ENCODE measurements at regions of chrX and their contacts with region 1.

Region 1: DNA sequence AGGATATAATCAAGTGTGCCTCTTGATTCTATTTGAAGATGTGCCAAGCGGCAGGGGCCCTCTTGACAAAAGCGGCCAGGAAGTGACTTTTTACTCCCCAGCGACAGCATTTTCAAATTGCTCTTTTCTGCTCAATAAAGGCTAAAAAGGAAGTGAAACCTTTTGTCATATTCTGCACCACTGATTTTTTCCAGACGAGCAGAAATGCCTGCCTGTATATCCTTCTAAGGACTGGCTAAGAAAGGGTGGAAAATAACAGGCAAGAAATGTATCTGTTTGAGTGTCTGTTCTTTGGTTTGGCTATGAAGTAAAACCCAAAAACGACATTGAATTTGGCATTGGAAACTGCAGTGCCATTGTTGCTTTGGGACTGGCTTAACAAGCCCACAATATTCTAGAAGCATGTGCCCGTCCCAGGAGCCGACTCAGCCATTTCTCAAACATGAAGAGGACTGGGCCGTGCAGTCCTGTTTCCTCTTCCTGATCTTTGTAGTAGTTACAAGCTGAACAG is 25.4 kb downstream of the TMSB4X start:
- DNase-seq: peak; percentile 67
- ATAC-seq: peak; percentile 46
- H3K4me3 Mint-ChIP-seq: peak overlapping the region; percentile 74
- H3K27ac Mint-ChIP-seq: peak overlapping the region; percentile 96
- H3K4me1 Mint-ChIP-seq: peaks cover 65% of the 10 kb centered on the region
- H3K27me3 Mint-ChIP-seq: no peaks in the 10 kb centered on the region
- CTCF ChIP-seq: no peak

Region 2: DNA sequence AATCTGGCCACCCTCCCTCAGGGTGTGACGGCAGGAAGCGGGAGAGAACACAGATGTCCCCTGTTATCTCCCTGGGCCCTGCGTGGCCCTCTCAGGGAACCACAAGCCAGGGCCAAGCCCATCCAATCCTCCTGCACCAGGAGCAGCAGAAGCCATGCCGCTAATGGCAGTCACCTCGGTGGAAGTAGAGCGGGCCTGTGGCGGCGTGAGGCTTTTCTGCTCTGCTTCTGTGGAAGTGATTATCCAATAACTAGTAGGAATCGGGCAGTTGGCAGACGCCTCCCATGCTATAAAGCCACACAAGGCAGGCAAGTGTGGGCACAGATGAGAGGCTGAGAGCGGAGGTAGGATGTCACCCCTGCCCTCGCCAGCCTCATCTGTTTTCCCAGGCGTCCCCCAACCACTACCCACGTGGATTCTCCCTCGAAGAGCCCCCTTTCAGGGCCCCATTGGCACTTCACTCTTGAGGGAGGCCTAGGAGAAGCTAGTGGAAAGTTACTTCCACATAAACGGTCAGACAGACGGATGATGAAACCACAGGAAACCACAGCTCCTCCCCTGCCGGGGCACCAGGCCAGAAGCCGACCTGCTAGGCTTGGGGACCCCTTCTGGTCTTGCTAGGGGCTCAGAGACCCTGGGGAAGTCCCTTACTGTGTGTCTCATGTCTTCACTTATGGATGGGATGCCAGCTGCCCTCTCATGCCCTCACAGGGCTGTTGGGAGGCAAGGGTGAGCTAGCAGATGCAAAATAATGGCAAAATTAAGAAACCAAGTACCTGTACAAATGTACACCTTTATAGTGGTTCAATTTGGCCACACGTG is 44.3 kb before region 1 on chrX:
- CTCF ChIA-PET with region 1: interaction called, 3 read pairs
- POLR2A ChIA-PET with region 1: interaction called, 12 read pairs
- intact Hi-C with region 1: no loop called
- DNase-seq: peak; percentile 83
- ATAC-seq: peak; percentile 45
- H3K4me3 Mint-ChIP-seq: peak overlapping the region; percentile 88
- H3K27ac Mint-ChIP-seq: peak overlapping the region; percentile 98
- H3K4me1 Mint-ChIP-seq: peaks cover 53% of the 10 kb centered on the region
- H3K27me3 Mint-ChIP-seq: no peaks in the 10 kb centered on the region
- CTCF ChIP-seq: no peak

Region 3: GRCh38 chrX:12984629-12985319 is 15.6 kb before region 1 on chrX:
- CTCF ChIA-PET with region 1: interaction called, 3 read pairs
- POLR2A ChIA-PET with region 1: interaction called, 127 read pairs
- intact Hi-C with region 1: loop called (anchors 2 kb)
- DNase-seq: peak; percentile 66
- ATAC-seq: peak; percentile 81
- H3K4me3 Mint-ChIP-seq: peak overlapping the region; percentile 50
- H3K27ac Mint-ChIP-seq: peak overlapping the region; percentile 97
- H3K4me1 Mint-ChIP-seq: peaks cover 74% of the 10 kb centered on the region
- H3K27me3 Mint-ChIP-seq: no peaks in the 10 kb centered on the region
- CTCF ChIP-seq: no peak

Region 4: GRCh38 chrX:13029341-13029740 is 29.0 kb after region 1 on chrX:
- CTCF ChIA-PET with region 1: no interaction called
- POLR2A ChIA-PET with region 1: no interaction called
- intact Hi-C with region 1: no loop called
- DNase-seq: no peak
- ATAC-seq: no peak
- H3K4me3 Mint-ChIP-seq: peak overlapping the region; percentile 32
- H3K27ac Mint-ChIP-seq: peak overlapping the region; percentile 79
- H3K4me1 Mint-ChIP-seq: peaks cover 66% of the 10 kb centered on the region
- H3K27me3 Mint-ChIP-seq: no peaks in the 10 kb centered on the region
- CTCF ChIP-seq: no peak

Region 5: GRCh38 chrX:14220386-14220944 is 1220.1 kb after region 1 on chrX:
- CTCF ChIA-PET with region 1: no interaction called
- POLR2A ChIA-PET with region 1: no interaction called
- intact Hi-C with region 1: no loop called
- DNase-seq: no peak
- ATAC-seq: no peak
- H3K4me3 Mint-ChIP-seq: no peak overlapping the region
- H3K27ac Mint-ChIP-seq: no peak overlapping the region
- H3K4me1 Mint-ChIP-seq: no peaks in the 10 kb centered on the region
- H3K27me3 Mint-ChIP-seq: no peaks in the 10 kb centered on the region
- CTCF ChIP-seq: no peak